Activated CD8-positive, alpha-beta memory T cell treated with anti-CD3 and anti-CD28 coated beads, Interleukin-2, amount 10 ng/mL, durations not matched to agents 7 days and 5 days (primary cell): ENCODE measurements at regions of chr20 and their contacts with region 1.

Region 1: GRCh38 chr20:35092524-35093266 is at the start of gene TRPC4AP:
- DNase-seq: peak; percentile 92
- ATAC-seq: peak; percentile 94
- H3K4me3 Mint-ChIP-seq: peak within 1 kb of the TSS; percentile 91
- H3K27ac Mint-ChIP-seq: peak within 1 kb of the TSS; percentile 92
- H3K4me1 Mint-ChIP-seq: peaks cover 53% of the 10 kb centered on the region
- H3K27me3 Mint-ChIP-seq: no peaks in the 10 kb centered on the region
- total RNA-seq, gene TRPC4AP: 56.9 to 70.9 TPM

Region 2: DNA sequence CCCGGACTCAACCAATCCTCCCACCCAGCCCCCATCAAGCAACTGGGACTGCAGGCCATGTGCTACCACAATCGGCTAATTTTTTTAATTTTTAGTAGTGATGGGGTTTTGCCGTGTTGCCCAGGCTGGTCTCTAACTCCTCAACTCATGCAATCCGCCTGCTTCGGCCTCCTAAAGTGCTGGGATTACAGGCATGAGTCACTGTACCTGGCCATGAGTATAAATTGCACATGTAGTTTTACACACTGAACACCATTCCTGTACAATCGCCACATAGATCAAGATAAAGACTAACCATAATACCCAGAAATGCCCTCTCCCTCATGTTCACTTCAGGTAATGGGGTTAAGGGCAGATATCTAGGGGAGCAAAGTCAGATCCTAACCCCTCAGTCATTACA is 26.5 kb before region 1 on chr20:
- CTCF ChIA-PET with region 1: interaction called, 12 read pairs
- DNase-seq: no peak
- ATAC-seq: no peak
- H3K4me3 Mint-ChIP-seq: no peak overlapping the region
- H3K27ac Mint-ChIP-seq: no peak overlapping the region
- H3K4me1 Mint-ChIP-seq: peaks cover 77% of the 10 kb centered on the region
- H3K27me3 Mint-ChIP-seq: no peaks in the 10 kb centered on the region

Region 3: GRCh38 chr20:35146920-35147574 is 54.4 kb after region 1 on chr20 and contains the start of gene EDEM2:
- CTCF ChIA-PET with region 1: interaction called, 24 read pairs
- DNase-seq: peak; percentile 96
- ATAC-seq: peak; percentile 95
- H3K4me3 Mint-ChIP-seq: peak within 1 kb of the TSS; percentile 93
- H3K27ac Mint-ChIP-seq: peak within 1 kb of the TSS; percentile 90
- H3K4me1 Mint-ChIP-seq: peaks cover 31% of the 10 kb centered on the region
- H3K27me3 Mint-ChIP-seq: no peaks in the 10 kb centered on the region
- total RNA-seq, gene EDEM2: 23.9 to 25.6 TPM

Region 4: DNA sequence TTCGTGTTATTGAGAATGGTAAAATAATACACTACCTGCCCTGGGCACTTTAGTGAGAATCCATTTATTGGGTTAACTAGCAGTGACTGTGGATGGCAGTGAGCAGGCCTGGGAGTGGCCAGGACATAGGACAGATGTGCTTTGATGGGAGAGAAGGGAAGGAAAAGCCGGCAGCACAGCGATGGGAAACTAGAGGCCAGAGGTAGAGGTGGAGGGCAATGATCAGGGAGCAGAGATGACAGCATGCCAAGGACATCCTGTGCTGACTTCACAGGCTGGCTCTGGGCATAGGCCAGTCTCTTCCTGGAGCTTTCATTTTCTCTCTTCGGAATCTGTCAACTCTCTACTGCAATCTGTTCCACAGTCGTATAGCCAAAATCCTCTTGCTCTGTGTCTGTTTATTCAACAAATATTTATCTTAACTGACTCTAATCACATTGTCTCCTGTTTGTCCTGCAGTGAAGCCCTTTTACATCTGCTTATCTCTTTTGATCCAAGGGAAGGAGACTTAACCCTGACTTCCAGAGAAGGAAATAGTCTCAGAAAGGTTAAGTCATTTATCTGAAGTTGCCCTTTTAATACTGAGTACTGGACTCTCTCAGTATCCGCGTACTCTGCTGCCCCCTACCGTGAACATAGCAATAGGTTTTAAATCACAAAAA is 115.4 kb after region 1 on chr20:
- CTCF ChIA-PET with region 1: interaction called, 39 read pairs
- DNase-seq: peak; percentile 87
- ATAC-seq: peak; percentile 91
- H3K4me3 Mint-ChIP-seq: no peak overlapping the region
- H3K27ac Mint-ChIP-seq: no peak overlapping the region
- H3K4me1 Mint-ChIP-seq: no peaks in the 10 kb centered on the region
- H3K27me3 Mint-ChIP-seq: no peaks in the 10 kb centered on the region

Region 5: GRCh38 chr20:35269055-35269781 is 176.5 kb after region 1 on chr20:
- CTCF ChIA-PET with region 1: interaction called, 27 read pairs
- DNase-seq: peak; percentile 68
- ATAC-seq: peak; percentile 82
- H3K4me3 Mint-ChIP-seq: no peak overlapping the region
- H3K27ac Mint-ChIP-seq: no peak overlapping the region
- H3K4me1 Mint-ChIP-seq: peaks cover 11% of the 10 kb centered on the region
- H3K27me3 Mint-ChIP-seq: no peaks in the 10 kb centered on the region